ENCODE measurements at regions of chr9 and their contacts with region 1.

Region 1: DNA sequence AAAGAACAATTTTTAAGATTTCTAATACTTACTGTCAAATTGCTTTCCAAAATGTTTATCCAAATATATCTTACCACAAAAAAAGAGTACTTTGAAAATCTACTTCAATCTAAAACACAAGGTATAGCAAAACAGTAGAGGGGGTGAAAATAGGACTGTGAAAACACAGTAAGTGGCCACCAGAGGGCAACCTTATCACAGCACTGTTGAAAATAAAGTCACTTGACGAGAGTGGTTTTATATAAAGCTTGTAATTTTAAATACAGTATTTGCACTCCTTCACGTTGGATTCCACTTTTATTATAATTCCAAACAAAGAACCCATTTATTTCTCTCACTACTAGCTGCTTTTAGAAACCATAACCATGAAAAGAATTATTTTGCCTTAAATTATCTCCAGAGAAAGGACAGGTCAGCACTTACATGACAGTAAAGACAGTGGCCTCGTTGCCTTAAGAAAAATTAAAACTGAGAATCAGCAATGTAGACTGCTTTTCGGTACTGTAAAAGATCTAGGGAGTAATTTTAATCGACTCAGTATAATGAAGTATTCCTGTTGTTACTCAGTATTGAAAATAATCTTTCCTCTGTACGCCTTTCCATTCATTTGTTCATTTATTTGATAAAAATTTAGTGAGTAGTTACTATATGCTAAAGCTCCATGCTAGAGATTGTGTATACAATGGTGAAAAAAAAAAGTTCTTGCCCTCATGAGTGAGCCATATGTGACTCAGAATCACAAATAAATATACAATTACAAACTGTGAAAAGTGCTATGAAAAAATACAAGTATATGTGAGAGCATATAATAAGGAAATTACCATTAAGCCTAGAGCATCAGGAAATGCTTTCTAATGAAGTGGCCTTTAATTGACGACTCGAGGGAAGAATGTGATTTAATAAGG is 40.0 kb upstream of the CDK5RAP2 start:
- DNase-seq: peak; percentile 48
- H3K4me3 ChIP-seq: no peak overlapping the region
- H3K27ac ChIP-seq: no peak overlapping the region
- H3K27me3 ChIP-seq: no peaks in the 10 kb centered on the region
- CTCF ChIP-seq: peak; percentile 82

Region 2: DNA sequence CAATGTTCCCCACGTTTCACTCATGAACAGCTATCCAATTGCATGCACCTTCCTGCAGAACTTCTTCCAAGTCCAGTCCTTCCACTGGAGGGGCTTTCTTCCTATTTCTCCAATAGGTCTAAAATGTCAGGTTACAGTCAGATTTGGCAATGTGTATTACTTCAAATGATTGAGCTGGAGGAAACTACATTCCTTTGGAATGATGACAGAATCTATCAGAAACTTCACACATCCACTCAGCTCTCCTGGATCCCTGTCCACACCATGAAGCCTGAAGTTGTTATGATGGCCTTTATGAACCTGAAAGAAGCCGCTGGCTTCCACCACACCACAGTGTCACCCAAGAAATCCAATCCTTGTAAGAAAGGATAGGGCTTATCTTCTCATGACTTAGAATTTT is 141.0 kb after region 1 on chr9:
- CTCF ChIA-PET with region 1: interaction called, 27 read pairs
- POLR2A ChIA-PET with region 1: no interaction called
- DNase-seq: no peak
- H3K4me3 ChIP-seq: no peak overlapping the region
- H3K27ac ChIP-seq: peak overlapping the region; percentile 41
- H3K27me3 ChIP-seq: no peaks in the 10 kb centered on the region
- CTCF ChIP-seq: no peak

Measured in AG04450 (cell line).